Psoas muscle (tissue), 8 donors: ENCODE measurements at regions of chr20 and their contacts with region 1.

Region 1: GRCh38 chr20:20052074-20052970 is at the starts of genes CFAP61 and CRNKL1:
- DNase-seq: peak; percentile 95 to 98
- ATAC-seq: peak; percentile 98 to 99 (median 98)
- H3K4me3 ChIP-seq: peak within 1 kb of the TSS; percentile 91
- H3K27ac ChIP-seq: peak within 1 kb of the TSS; percentile 91
- H3K4me1 ChIP-seq: peaks cover 9% of the 10 kb centered on the region
- H3K27me3 ChIP-seq: no peaks in the 10 kb centered on the region
- CTCF ChIP-seq: no peak
- total RNA-seq, gene CFAP61: 23.2 to 59.4 (median 38.8) TPM
- total RNA-seq, gene CRNKL1: 20.1 to 30.6 (median 24.2) TPM

Region 2: DNA sequence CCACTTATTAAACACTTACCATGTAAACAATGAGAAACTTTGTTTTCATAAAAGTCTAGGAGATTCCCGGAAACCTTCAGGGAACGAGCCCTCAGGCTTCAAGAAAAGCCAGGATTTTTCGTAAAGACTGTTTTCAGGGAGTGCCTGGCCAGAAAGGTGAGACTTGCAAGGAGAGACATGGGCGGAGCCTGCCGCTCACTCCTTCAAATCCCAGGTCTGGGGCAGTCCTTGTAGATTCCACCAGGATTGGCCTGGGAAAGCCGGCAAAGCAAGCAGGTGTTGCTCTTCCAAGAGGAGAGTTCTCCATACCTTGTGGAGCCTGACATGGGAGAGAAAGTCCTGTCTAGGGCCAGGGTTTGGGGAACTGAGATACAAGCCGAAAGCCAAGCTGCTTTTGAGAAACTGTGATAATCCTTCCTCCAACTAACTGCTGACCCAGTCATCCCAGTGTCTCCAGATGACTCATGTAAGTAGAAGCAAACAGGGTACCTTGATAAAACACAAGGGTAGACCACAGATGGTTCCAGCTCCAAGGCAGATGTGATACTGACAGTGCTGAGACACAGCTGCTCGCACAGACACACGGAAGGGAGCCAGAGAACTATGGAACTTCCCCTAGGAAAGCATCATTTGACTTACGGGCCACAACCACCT is 104.6 kb before region 1 on chr20:
- intact Hi-C with region 1: no loop called
- DNase-seq: no peak
- ATAC-seq: no peak
- H3K4me3 ChIP-seq: no peak overlapping the region
- H3K27ac ChIP-seq: no peak overlapping the region
- H3K4me1 ChIP-seq: peaks cover 24% of the 10 kb centered on the region
- H3K27me3 ChIP-seq: no peaks in the 10 kb centered on the region
- CTCF ChIP-seq: no peak

Region 3: GRCh38 chr20:20017001-20017843 is 35.1 kb before region 1 on chr20 and contains the start of gene NAA20:
- intact Hi-C with region 1: loop called in 1 of 2 experiments (anchors 5 kb)
- DNase-seq: peak; percentile 94 to 97
- ATAC-seq: peak; percentile 98 to 99 (median 98)
- H3K4me3 ChIP-seq: peak within 1 kb of the TSS; percentile 100
- H3K27ac ChIP-seq: peak within 1 kb of the TSS; percentile 93
- H3K4me1 ChIP-seq: peaks cover 45% of the 10 kb centered on the region
- H3K27me3 ChIP-seq: no peaks in the 10 kb centered on the region
- CTCF ChIP-seq: peak; percentile 74
- total RNA-seq, gene NAA20: 64.2 to 121 (median 89.5) TPM